H1 (cell line): ENCODE measurements at regions of chr12 and their contacts with region 1.

Region 1: GRCh38 chr12:26135010-26135420 is 10.2 kb upstream of the BHLHE41 start:
- DNase-seq: no peak
- H3K4me3 ChIP-seq: no peak overlapping the region
- H3K27ac ChIP-seq: no peak overlapping the region
- H3K4me1 ChIP-seq: peaks cover 0 to 3% (median under 1%) of the 10 kb centered on the region in 4 experiments; a peak in 3 of 7 replicates
- H3K27me3 ChIP-seq: peaks cover 0 to 2% (median 0%) of the 10 kb centered on the region in 4 experiments; a peak in 1 of 7 replicates
- CTCF ChIP-seq: no peak
- EP300 ChIP-seq: no peak
- POLR2A ChIP-seq: no peak
- RAD21 ChIP-seq: no peak

Region 2: DNA sequence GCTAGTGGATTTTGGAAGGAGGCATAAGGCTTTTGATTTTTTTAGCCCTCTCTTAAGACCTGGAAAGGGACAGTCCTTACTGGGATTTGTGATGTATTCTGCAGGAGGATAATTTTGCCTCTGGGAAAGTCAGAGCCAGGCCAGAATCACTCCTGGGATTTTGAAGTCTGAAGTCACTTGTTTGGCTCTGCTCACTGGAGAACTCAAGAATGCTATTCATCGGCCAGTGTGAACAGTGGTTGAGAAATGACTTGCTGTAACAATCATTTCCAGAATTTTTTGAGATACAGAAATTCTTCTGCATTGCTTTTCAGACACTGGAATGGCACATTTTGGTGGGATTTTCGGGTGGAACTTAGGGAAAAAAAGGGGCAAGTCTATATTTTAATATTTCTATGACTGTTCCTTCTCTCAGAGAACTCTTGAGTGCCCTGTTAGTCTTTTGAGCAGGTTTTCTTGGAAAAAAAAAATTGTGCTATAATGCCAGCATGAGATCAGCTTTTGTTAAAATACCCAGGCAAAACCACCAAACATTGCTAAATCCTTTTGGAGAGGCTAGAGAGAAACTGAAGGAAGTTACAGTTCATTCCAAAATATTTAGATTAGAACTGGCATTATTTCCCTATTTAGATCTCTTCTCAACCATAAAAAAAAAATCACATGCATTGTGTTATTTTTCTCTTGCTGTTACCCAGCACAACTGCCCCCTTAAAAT is 15.9 kb after region 1 on chr12:
- CTCF ChIA-PET with region 1: interaction called, 10 read pairs
- POLR2A ChIA-PET with region 1: no interaction called
- DNase-seq: no peak
- H3K4me3 ChIP-seq: no peak overlapping the region; a peak in 1 of 8 replicates
- H3K27ac ChIP-seq: no peak overlapping the region
- H3K4me1 ChIP-seq: no peaks in the 10 kb centered on the region
- H3K27me3 ChIP-seq: no peaks in the 10 kb centered on the region
- CTCF ChIP-seq: no peak
- EP300 ChIP-seq: no peak
- POLR2A ChIP-seq: no peak
- RAD21 ChIP-seq: no peak